ENCODE measurements at regions of chr7 and their contacts with region 1.

Region 1: DNA sequence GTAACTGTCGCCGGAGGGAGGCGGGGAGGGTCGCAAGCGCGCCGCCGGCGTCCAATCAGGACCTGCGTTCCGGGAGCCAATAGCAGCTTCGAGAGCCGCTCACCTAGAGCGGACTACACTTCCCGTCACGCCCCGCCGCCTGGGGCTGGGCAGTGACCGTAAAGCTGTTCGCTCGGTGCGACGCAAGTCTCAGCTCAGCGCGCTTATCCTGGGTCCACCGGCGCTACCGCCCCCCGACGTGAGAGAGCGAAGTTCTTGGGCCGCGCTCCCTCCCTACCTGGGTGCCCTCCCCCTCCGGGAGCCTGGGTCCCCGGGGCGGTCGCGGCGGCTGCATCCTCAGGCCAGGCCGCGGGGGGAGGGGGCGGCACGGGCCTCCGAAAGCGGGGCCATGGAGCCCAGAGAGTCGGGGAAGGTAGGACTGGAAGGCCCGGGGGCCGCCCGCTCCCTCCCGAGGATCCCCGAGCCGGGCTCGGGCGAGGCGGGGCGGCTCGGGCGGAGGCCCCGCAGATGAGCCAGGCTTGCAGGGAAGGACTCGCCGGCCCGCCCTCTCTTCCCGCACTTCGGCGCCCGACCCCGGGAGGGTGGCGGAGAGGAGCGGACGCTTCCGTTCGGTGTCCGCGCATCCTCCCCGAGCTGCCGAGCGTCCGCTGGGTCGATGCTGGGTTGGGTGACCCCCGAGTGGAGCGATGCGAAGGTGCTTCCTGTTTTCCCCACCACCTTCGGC is at the start of gene ZNF862:
- DNase-seq: peak; percentile 98
- ATAC-seq: peak; percentile 98
- H3K4me3 Mint-ChIP-seq: peak within 1 kb of the TSS; percentile 78
- H3K27ac Mint-ChIP-seq: peak within 1 kb of the TSS; percentile 74
- H3K4me1 Mint-ChIP-seq: peaks cover 28% of the 10 kb centered on the region
- H3K27me3 Mint-ChIP-seq: no peaks in the 10 kb centered on the region
- total RNA-seq, gene ZNF862: 17.6 to 18.3 TPM

Region 2: DNA sequence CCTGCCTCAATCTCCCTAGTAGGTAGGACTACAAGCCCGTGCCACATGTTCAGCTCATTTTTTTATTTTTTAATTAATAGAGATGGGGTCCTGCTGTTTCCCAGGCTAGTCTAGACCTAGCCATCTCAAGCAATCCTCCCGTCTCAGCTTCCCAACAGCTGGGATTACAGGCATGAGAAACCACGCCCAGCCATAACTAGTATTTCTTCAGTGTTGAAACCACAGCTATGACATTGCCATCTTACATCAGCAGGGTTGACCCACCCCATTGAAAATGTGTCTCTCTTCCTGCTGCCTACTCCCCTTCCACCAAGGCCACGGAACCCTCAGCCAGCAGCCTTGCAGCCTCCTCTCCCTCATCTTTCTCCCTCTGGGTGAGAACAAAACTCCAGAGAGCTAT is 278.7 kb before region 1 on chr7:
- CTCF ChIA-PET with region 1: no interaction called
- POLR2A ChIA-PET with region 1: no interaction called
- intact Hi-C with region 1: no loop called
- DNase-seq: no peak
- ATAC-seq: no peak
- H3K4me3 Mint-ChIP-seq: no peak overlapping the region
- H3K27ac Mint-ChIP-seq: no peak overlapping the region
- H3K4me1 Mint-ChIP-seq: no peaks in the 10 kb centered on the region
- H3K27me3 Mint-ChIP-seq: no peaks in the 10 kb centered on the region

Region 3: GRCh38 chr7:149771721-149772240 is 66.6 kb before region 1 on chr7:
- CTCF ChIA-PET with region 1: interaction called, 3 read pairs
- POLR2A ChIA-PET with region 1: no interaction called
- intact Hi-C with region 1: loop called in 1 of 2 experiments (anchors 1 kb)
- DNase-seq: peak; percentile 93
- ATAC-seq: peak; percentile 98
- H3K4me3 Mint-ChIP-seq: peak overlapping the region; percentile 59
- H3K27ac Mint-ChIP-seq: no peak overlapping the region
- H3K4me1 Mint-ChIP-seq: peaks cover 2% of the 10 kb centered on the region
- H3K27me3 Mint-ChIP-seq: peaks cover 9% of the 10 kb centered on the region

Region 4: GRCh38 chr7:149787428-149788299 is 50.7 kb before region 1 on chr7:
- CTCF ChIA-PET with region 1: no interaction called
- POLR2A ChIA-PET with region 1: no interaction called
- intact Hi-C with region 1: no loop called
- DNase-seq: peak; percentile 45
- ATAC-seq: peak; percentile 76
- H3K4me3 Mint-ChIP-seq: no peak overlapping the region
- H3K27ac Mint-ChIP-seq: no peak overlapping the region
- H3K4me1 Mint-ChIP-seq: no peaks in the 10 kb centered on the region
- H3K27me3 Mint-ChIP-seq: peaks cover 12% of the 10 kb centered on the region

Region 5: DNA sequence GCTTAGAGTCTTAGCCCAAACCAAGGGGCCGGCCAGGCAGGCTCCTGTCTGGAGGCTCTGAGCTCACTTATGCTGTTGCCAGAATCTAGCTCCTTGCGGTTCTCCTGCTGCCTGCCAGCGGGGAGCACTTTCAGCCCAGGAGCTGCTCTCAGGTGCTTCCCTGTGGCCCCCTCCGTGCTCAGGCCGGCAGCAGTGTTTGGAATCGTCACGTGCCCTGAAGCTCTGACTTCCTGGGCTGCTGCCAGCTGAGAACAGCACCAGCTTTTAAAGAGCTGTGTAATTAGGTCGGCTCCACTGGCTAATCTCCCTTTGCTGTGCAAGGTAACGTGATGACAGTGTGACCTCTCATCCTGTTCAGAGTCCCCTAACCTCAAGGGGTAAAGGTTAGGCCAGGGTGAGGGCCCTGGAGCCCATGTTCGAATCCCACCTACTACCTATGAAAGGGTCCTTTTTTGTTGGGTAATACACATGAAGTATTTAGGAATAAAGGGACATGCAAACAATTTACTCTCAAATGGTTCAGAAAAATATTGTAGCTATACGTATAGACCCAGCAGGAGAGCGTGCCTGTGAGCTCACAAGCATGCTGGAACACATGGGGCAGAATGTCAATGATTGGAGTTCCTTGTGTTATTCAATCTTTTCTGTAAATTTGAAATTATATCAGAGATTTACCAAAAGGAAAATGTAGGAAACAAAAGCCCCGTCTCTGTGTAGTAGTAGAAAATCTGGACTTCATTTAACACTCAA is 16.4 kb after region 1 on chr7:
- CTCF ChIA-PET with region 1: interaction called, 16 read pairs
- POLR2A ChIA-PET with region 1: interaction called, 3 read pairs
- intact Hi-C with region 1: no loop called
- DNase-seq: peak; percentile 50
- ATAC-seq: peak; percentile 62
- H3K4me3 Mint-ChIP-seq: no peak overlapping the region
- H3K27ac Mint-ChIP-seq: peak overlapping the region; percentile 68
- H3K4me1 Mint-ChIP-seq: peaks cover 57% of the 10 kb centered on the region
- H3K27me3 Mint-ChIP-seq: no peaks in the 10 kb centered on the region

Region 6: GRCh38 chr7:150838970-150839650 is 1000.7 kb after region 1 on chr7:
- CTCF ChIA-PET with region 1: no interaction called
- POLR2A ChIA-PET with region 1: no interaction called
- intact Hi-C with region 1: no loop called
- DNase-seq: no peak
- ATAC-seq: no peak
- H3K4me3 Mint-ChIP-seq: no peak overlapping the region
- H3K27ac Mint-ChIP-seq: no peak overlapping the region
- H3K4me1 Mint-ChIP-seq: no peaks in the 10 kb centered on the region
- H3K27me3 Mint-ChIP-seq: peaks cover 1% of the 10 kb centered on the region

Measured in activated CD4-positive, alpha-beta T cell treated with anti-CD3 and anti-CD28 coated beads for 36 hours (primary cell).